Endothelial cell of umbilical vein (primary cell): ENCODE measurements at regions of chr3 and their contacts with region 1.

Region 1: GRCh38 chr3:197117092-197117491 is 87.5 kb upstream of the MELTF start:
- DNase-seq: no peak
- H3K4me3 ChIP-seq: no peak overlapping the region
- H3K27ac ChIP-seq: no peak overlapping the region
- H3K4me1 ChIP-seq: no peaks in the 10 kb centered on the region
- H3K27me3 ChIP-seq: no peaks in the 10 kb centered on the region
- CTCF ChIP-seq: no peak
- POLR2A ChIP-seq: no peak

Region 2: DNA sequence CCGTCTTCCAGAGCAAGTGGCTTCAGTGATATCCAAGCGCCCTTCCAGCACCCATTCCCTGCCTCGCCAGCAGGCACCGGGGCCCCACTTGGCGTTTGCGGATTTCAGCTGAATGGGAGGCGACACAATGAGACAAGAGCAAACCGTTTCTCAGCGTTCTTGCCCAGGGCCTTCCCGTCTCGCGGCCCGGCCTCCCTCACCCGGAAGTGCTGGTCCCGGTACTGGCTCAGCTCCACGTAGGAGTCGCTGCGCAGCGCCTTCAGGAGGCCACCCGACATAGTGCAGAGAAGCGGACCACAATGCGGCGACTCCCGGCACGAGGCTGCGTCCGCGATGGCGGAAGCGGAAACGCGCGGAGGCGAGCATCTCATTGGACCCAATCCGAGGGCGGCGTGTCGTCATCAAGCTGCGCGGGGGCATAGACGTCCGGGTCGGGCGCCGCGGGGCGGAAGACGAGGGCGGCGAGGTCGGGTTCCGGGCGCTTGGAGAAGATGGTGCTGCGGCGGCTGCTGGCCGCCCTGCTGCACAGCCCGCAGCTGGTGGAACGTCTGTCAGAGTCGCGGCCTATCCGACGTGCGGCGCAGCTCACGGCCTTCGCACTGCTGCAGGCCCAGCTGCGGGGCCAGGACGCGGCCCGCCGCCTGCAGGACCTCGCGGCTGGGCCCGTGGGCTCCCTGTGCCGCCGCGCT is 174.7 kb before region 1 on chr3 and contains the start of gene NCBP2:
- CTCF ChIA-PET with region 1: no interaction called
- POLR2A ChIA-PET with region 1: no interaction called
- dilution Hi-C with region 1: no loop called
- intact Hi-C with region 1: no loop called
- DNase-seq: peak; percentile 98
- H3K4me3 ChIP-seq: peak within 1 kb of the TSS; percentile 73 to 93 (median 85)
- H3K27ac ChIP-seq: peak within 1 kb of the TSS; percentile 76
- H3K4me1 ChIP-seq: peaks cover 16% of the 10 kb centered on the region
- H3K27me3 ChIP-seq: no peaks in the 10 kb centered on the region
- CTCF ChIP-seq: peak; percentile 64 to 81
- POLR2A ChIP-seq: peak; percentile 90
- total RNA-seq, gene NCBP2: 73.4 and 76.1 TPM in 2 replicates

Region 3: GRCh38 chr3:197076415-197076814 is 40.7 kb before region 1 on chr3:
- CTCF ChIA-PET with region 1: interaction called, 4 read pairs
- POLR2A ChIA-PET with region 1: interaction called, 10 read pairs
- dilution Hi-C with region 1: no loop called
- intact Hi-C with region 1: no loop called
- DNase-seq: no peak
- H3K4me3 ChIP-seq: no peak overlapping the region
- H3K27ac ChIP-seq: no peak overlapping the region
- H3K4me1 ChIP-seq: no peaks in the 10 kb centered on the region
- H3K27me3 ChIP-seq: no peaks in the 10 kb centered on the region
- CTCF ChIP-seq: no peak
- POLR2A ChIP-seq: no peak